ENCODE measurements at regions of chr12 and their contacts with region 1.

Region 1: DNA sequence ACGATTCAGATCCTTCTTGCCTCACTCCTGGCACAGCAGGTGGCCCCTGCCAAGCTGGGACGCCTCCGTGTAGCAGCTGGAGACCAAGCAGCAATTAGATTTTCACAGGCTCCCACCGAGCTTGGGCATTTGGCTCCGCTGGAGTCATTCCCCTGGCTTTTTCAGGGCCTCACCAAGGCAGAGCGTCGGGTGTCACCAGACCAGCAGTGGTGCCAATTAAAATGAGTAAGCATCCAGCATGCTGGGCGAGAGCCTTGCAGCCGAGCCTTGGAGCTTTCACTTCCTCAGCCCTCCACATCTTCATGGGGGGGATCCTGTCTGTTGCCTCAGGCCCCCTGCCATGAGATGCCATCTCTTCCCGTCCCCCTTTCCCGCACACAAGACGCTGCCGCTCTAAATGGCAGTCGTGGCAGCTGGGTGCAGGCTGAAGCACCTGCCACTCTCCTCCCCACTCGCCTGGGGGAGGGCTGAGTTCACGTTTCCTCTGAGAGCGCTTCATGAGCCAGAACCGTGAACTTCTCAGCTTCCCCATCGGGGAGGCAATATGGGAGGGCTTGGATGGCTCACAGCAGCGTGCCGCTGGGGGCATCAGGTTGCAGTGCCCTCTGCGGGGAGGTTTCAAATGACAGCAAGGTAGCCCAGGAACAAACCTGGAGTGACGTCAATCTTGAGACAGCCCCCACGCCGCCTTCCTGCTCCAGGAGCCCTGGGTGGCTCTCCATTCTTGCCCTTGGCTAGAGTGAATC is 11.7 kb downstream of the TPCN1 start:
- DNase-seq: peak; percentile 47
- H3K4me3 Mint-ChIP-seq: peak overlapping the region; percentile 79
- H3K27ac Mint-ChIP-seq: peak overlapping the region; percentile 88
- H3K4me1 Mint-ChIP-seq: peaks cover 61% of the 10 kb centered on the region
- H3K27me3 Mint-ChIP-seq: no peaks in the 10 kb centered on the region

Region 2: GRCh38 chr12:113214938-113215400 is 18.0 kb before region 1 on chr12:
- intact Hi-C with region 1: loop called (anchors 2 kb)
- DNase-seq: no peak
- H3K4me3 Mint-ChIP-seq: no peak overlapping the region
- H3K27ac Mint-ChIP-seq: peak overlapping the region; percentile 58
- H3K4me1 Mint-ChIP-seq: peaks cover 57% of the 10 kb centered on the region
- H3K27me3 Mint-ChIP-seq: peaks cover 1% of the 10 kb centered on the region